ENCODE measurements at regions of chr13 and their contacts with region 1.

Region 1: GRCh38 chr13:102596147-102597028 is at the start of gene TPP2:
- DNase-seq: peak; percentile 83
- H3K4me3 ChIP-seq: peak within 1 kb of the TSS; percentile 96
- CTCF ChIP-seq: no peak

Region 2: DNA sequence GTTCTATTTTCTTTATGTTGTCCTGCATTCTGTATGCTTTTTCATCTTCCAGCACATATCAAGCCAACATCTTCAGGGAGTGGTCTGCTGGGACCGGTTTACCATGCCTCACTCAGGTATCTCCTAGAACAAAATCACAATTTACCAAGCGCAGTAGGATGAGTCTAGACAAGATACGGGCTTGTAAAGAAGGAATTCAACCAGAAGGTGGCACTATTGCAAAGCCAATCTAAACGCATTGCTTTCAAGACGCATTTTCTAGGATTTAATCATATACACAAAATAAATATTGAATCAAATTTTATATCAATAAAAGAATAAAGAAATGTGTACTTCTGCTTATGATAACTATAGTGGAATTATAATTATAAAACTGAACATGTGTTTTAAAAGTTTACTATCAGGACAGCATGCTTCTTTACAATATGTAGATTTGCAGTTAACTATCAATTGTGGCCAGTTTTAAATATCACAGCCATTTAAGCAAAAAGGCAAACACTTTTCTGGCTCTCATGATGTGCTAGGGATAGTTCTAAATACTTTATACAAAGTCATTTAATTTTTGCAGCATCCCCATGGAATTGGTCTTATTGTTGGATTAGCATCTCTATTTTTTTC is 15.7 kb before region 1 on chr13:
- CTCF ChIA-PET with region 1: interaction called, 88 read pairs
- POLR2A ChIA-PET with region 1: no interaction called
- DNase-seq: no peak
- H3K4me3 ChIP-seq: no peak overlapping the region
- CTCF ChIP-seq: peak; percentile 66

Region 3: GRCh38 chr13:102702965-102703725 is 106.8 kb after region 1 on chr13:
- CTCF ChIA-PET with region 1: interaction called, 14 read pairs
- POLR2A ChIA-PET with region 1: no interaction called
- DNase-seq: no peak
- H3K4me3 ChIP-seq: no peak overlapping the region
- CTCF ChIP-seq: no peak

Region 4: DNA sequence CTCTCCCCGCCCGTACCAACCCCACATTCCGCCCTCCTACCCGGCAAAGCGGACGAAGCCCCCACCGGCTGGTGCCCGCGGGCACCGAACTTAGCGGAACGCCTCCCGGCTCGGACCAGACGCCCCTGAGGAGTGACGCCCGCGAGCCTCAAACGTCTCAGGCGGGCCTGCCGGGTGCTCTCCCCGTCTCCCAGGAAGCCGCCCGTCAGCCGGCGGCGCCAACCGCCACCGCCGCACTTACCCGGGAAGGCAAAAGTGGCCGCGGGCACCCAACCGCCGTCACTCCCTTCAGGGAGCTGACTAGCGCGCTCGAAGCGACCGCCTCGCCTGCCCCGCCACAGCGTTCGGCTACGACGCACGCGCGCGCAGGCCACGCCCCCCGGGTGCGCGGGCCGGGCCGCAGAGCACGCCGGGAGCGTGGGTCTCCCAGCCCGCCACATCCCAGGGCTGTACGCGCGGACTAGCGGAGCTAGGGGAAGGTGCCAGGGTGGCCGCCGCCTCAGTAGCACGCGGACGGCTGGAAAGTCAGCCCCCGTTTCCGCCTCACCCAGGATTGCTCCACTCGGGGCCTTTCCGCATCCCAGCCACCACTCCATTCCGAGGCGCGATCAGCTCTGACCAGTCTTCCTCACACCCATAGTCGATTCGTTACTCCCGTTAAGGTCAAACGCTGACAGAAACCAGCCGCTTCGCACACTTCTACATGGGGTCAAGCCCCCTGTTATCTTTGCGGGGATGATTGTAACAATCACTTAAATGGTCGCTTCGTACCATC is 177.2 kb after region 1 on chr13 and contains the start of gene TEX30:
- CTCF ChIA-PET with region 1: interaction called, 15 read pairs
- POLR2A ChIA-PET with region 1: interaction called, 11 read pairs
- DNase-seq: no peak
- H3K4me3 ChIP-seq: peak within 1 kb of the TSS; percentile 84
- CTCF ChIP-seq: no peak

Region 5: DNA sequence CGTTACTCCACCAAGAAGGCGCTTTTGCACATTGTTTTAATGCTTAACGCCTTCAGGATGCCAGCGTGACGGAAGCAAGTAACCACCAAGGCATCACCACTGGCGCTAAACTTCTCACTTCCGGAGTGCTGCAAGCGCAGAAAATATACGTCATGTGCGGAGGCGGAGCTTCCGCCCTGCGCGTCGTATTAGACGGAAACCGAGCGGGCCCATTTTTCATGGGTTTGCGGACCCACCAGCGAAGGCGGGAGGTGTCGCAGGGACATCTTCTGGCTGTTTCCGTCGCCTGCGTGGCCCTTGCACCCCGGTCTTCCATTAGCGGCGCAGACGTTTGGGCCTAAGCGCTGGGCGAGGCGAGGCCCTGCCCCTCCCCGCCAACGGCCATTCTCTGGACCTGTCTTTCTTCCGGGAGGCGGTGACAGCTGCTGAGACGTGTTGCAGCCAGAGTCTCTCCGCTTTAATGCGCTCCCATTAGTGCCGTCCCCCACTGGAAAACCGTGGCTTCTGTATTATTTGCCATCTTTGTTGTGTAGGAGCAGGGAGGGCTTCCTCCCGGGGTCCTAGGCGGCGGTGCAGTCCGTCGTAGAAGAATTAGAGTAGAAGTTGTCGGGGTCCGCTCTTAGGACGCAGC is 249.4 kb after region 1 on chr13 and contains the start of gene ERCC5:
- CTCF ChIA-PET with region 1: interaction called, 61 read pairs
- POLR2A ChIA-PET with region 1: interaction called, 9 read pairs
- DNase-seq: peak; percentile 74
- H3K4me3 ChIP-seq: peak within 1 kb of the TSS; percentile 95
- CTCF ChIP-seq: no peak

Region 6: GRCh38 chr13:103031332-103031873 is 435.0 kb after region 1 on chr13:
- CTCF ChIA-PET with region 1: no interaction called
- POLR2A ChIA-PET with region 1: no interaction called
- DNase-seq: no peak
- H3K4me3 ChIP-seq: no peak overlapping the region
- CTCF ChIP-seq: no peak